ENCODE measurements at regions of chrX and their contacts with region 1.

Region 1: DNA sequence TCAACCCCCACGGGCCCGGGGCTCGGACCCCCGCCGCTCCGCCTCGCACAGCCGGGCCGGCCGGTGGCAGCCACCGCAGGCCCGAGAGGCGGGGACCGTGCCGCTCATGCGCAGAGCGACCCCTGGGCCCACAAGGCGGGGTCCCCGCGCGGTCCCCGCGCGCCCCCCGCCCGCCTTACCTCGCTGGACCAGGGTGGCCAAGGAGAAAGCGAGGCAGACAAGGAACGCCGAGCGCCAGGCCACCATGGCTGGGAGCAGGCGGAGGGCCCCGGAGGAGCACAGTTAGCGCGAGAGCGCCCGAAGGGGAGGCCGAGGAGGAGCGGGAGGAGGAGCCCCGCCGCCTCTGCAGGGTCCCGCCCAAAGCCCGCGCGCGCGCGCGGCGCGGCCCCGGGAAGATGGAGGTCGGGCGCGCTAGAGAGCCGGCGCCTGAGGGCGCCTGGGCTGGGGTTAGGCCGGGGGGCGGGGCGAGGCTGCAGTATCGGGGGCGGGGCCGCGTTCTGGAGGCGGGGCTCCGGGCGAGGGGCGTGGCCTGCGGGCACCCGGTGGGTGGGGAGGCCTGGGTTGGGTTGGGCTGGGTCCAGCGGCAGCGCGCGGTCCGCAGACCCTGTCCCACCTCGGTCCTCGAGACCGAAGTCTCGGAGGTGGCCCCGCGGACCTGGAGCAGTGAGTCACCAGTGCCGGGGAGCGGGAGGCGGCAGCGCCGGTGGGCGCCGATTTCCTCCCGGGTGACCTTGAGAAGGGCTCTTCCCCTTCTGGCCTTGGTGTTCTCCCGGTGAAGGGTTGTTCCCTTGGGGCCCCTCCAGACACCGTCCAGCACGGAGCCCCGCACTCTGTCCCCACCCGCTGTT is at the start of gene CD99L2:
- DNase-seq: peak; percentile 83
- H3K4me3 Mint-ChIP-seq: peak within 1 kb of the TSS; percentile 84
- H3K27ac Mint-ChIP-seq: peak within 1 kb of the TSS; percentile 46
- H3K4me1 Mint-ChIP-seq: peaks cover 3% of the 10 kb centered on the region
- H3K27me3 Mint-ChIP-seq: peaks cover 19% of the 10 kb centered on the region
- total RNA-seq, gene CD99L2: 9.8 and 12.0 TPM in 2 replicates

Region 2: GRCh38 chrX:149938427-149939270 is 959.9 kb before region 1 on chrX and contains the start of gene EOLA2:
- intact Hi-C with region 1: loop called (anchors 10 kb)
- DNase-seq: peak; percentile 90
- H3K4me3 Mint-ChIP-seq: peak within 1 kb of the TSS; percentile 86
- H3K27ac Mint-ChIP-seq: peak within 1 kb of the TSS; percentile 99
- H3K4me1 Mint-ChIP-seq: peaks cover 1% of the 10 kb centered on the region
- H3K27me3 Mint-ChIP-seq: no peaks in the 10 kb centered on the region
- total RNA-seq, gene EOLA2: 45.1 and 45.2 TPM in 2 replicates

Region 3: DNA sequence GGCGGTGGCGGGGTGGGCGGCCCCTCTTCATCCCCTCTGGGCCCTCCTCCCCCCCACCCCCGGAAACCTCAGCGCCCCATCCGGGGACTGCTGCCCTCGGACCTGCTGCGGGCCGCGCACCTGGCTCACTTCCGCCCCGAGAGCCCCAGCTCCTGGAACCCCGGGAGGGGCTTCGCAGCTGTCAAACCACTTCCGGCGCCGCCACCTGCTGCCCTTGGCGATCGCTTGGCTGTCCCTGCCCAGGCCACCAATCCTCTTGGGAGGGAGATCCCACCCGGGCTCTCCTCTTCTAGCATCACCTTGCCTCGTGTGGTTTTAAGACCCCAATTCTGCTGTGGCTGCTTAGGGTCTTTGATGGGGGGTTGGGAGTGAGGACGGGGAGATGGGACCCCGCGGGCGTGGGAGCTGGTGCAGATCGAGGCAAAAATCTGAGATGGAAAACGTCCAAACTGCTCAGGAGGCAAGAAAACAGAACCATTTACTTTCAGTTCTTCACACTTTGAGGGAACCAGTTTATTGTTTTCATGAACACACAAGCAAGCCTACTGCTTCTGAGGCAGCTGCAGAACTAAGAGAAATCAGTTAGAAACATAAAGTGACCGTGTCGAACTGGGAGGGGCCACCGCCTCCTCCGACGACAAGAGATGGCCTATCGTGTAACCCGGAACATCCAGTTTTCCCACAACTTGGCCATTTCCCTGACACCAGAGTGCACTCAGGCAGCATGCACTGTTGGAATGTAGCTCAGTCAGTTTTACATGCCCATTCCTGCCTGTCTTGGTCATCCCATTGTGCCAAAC is 204.6 kb before region 1 on chrX:
- intact Hi-C with region 1: no loop called
- DNase-seq: peak; percentile 63
- H3K4me3 Mint-ChIP-seq: peak overlapping the region; percentile 84
- H3K27ac Mint-ChIP-seq: peak overlapping the region; percentile 92
- H3K4me1 Mint-ChIP-seq: peaks cover 52% of the 10 kb centered on the region
- H3K27me3 Mint-ChIP-seq: no peaks in the 10 kb centered on the region

Region 4: GRCh38 chrX:150781677-150782076 is 116.9 kb before region 1 on chrX:
- intact Hi-C with region 1: loop called (anchors 10 kb)
- DNase-seq: no peak
- H3K4me3 Mint-ChIP-seq: no peak overlapping the region
- H3K27ac Mint-ChIP-seq: no peak overlapping the region
- H3K4me1 Mint-ChIP-seq: peaks cover 2% of the 10 kb centered on the region
- H3K27me3 Mint-ChIP-seq: no peaks in the 10 kb centered on the region

Region 5: GRCh38 chrX:150879855-150880808 is 18.4 kb before region 1 on chrX:
- intact Hi-C with region 1: loop called (anchors 1 kb)
- DNase-seq: no peak
- H3K4me3 Mint-ChIP-seq: no peak overlapping the region
- H3K27ac Mint-ChIP-seq: peak overlapping the region; percentile 44
- H3K4me1 Mint-ChIP-seq: peaks cover 23% of the 10 kb centered on the region
- H3K27me3 Mint-ChIP-seq: no peaks in the 10 kb centered on the region

Region 6: DNA sequence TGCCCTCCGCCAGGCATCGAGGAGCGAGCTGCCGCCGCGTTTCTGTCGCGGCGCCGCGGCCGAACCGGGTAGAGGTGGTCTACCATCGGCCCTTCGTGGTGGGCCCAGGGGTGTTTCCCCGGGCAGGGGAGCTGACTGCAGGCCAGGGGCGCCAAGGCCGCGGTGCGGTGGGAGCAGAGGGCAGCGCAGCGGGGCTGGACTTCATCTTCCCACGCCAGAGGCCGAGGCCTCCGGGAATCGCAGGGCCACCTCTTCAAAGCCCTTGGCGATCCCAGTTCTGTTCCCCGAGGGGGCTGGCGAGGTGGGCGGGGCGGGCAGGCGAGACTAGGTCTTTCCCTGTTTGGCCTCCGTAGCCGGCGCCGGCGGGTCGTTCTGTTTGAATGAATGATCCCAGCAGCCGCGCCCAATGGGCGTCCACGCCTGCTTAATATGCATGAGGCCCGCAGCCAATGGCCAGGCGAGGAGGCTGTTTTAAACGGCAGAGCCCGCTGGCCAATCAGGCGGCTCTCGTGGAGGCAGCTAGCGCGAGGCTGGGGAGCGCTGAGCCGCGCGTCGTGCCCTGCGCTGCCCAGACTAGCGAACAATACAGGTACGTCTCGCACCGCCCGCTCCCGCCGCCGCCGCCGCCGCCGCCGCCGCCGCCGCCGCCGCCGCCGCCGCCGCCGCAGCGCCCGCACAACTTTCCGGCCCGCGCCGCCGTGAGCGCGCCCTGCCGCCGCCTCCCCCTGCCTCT is 84.4 kb after region 1 on chrX and contains the start of gene HMGB3:
- intact Hi-C with region 1: loop called (anchors 1 kb)
- DNase-seq: peak; percentile 81
- H3K4me3 Mint-ChIP-seq: peak within 1 kb of the TSS; percentile 63
- H3K27ac Mint-ChIP-seq: no peak within 1 kb of the TSS
- H3K4me1 Mint-ChIP-seq: peaks cover 16% of the 10 kb centered on the region
- H3K27me3 Mint-ChIP-seq: no peaks in the 10 kb centered on the region
- total RNA-seq, gene HMGB3: 52.6 and 60.8 TPM in 2 replicates

Region 7: GRCh38 chrX:151019856-151020255 is 121.3 kb after region 1 on chrX:
- intact Hi-C with region 1: no loop called
- DNase-seq: no peak
- H3K4me3 Mint-ChIP-seq: no peak overlapping the region
- H3K27ac Mint-ChIP-seq: no peak overlapping the region
- H3K4me1 Mint-ChIP-seq: no peaks in the 10 kb centered on the region
- H3K27me3 Mint-ChIP-seq: no peaks in the 10 kb centered on the region

Region 8: DNA sequence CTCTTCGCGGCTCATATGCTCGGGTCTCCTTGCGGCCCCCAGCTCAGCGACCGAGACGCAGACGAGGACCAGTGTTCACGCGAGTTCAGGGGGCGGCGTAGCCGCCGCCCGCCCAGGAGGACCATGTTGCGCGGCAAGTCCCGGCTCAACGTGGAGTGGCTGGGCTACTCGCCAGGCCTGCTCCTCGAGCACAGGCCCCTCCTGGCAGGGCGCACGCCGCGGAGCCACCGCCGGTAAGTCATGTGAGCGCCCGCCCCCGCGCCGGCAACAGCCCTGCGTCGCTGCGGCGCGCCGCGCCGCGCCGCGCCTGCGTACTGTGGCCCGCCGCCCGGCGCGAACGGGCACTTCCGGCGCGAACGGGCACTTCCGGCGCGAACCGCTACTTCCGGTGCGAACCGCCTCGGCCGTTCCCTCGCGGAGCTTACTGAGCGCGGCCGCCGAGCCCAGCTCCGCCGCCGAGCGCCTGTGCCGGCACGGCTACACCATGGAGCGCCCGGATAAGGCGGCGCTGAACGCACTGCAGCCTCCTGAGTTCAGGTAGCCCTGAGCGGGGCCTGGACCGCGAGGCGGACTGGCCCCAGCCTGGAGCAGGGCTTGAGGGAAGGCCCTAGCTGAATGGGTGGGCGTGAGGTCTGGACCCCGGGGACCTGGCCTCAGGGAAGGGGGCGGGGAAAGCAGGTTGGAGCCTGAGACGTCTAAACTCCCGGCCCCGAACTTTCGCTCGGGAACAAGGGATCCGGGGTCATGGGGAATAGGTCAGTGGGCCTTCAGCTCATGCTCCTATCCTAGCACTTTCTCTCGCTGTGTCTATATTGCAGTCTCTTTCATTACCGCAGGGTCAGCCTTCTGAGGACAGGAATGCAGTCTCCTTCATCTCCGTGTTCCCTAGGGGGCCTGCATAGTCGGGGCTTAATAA is 498.5 kb after region 1 on chrX and contains the start of gene VMA21:
- intact Hi-C with region 1: loop called (anchors 5 kb)
- DNase-seq: peak; percentile 76
- H3K4me3 Mint-ChIP-seq: peak within 1 kb of the TSS; percentile 87
- H3K27ac Mint-ChIP-seq: peak within 1 kb of the TSS; percentile 89
- H3K4me1 Mint-ChIP-seq: peaks cover 36% of the 10 kb centered on the region
- H3K27me3 Mint-ChIP-seq: no peaks in the 10 kb centered on the region
- total RNA-seq, gene VMA21: 40.8 and 43.1 TPM in 2 replicates

Measured in activated T-helper 2 cell treated with anti-CD3 and anti-CD28 coated beads, Interferon-gamma antibody, Interleukin-2, Interleukin-4, amounts not matched to agents 10 μg/mL and 5 μg/mL and 100 μg/mL, durations not matched to agents 14 hours and 24 hours and 36 hours (primary cell).